Gastrocnemius medialis (tissue), 4 donors: ENCODE measurements at regions of chr5 and their contacts with region 1.

Region 1: DNA sequence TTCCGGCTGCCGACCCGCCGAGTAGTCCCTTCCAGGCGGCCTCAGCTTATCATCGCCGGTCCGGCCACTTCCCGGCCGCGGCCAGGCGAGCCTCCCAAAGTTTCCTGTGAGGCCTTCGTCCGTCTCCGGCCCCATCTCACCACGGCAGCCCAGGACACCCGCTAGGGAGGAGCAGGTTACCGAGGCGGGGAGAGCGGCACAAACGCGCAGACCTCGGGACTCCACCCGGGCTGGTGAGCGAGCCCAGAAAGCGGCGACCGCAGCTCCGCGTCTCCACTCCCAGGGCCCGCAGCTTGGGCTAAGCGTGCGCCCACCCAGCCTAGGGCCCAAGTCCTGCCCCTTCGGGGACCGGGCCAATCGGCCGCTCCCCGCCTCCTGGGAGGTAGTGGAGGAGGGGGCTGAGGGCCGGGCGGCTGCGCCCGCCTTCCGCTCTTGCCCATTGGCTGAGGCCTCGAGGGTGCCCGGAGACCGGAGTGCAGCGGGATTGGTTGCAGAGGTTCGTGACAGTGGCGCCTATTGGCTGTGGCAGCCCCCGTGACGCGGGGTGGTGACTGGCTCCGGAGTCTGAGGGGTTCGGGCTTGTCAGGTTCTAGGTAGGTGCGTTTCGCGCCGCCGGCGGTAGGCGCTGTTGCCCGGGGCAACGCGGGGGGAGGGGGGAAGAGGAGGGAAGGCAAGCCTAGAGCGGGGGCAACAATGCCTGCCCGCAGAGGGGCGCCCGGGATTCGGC is 867 bp downstream of the FER start:
- DNase-seq: peak; percentile 99
- ATAC-seq: peak; percentile 94 to 95
- H3K4me3 ChIP-seq: peak overlapping the region; percentile 88 to 99 (median 96)
- H3K27ac ChIP-seq: peak overlapping the region; percentile 96 to 100 (median 98)
- H3K4me1 ChIP-seq: peaks cover 3 to 15% of the 10 kb centered on the region in 2 donors
- H3K27me3 ChIP-seq: no peaks in the 10 kb centered on the region
- CTCF ChIP-seq: peak in 2 of 5 experiments; percentile 16 to 35
- POLR2A ChIP-seq: peak; percentile 95 to 96

Region 2: DNA sequence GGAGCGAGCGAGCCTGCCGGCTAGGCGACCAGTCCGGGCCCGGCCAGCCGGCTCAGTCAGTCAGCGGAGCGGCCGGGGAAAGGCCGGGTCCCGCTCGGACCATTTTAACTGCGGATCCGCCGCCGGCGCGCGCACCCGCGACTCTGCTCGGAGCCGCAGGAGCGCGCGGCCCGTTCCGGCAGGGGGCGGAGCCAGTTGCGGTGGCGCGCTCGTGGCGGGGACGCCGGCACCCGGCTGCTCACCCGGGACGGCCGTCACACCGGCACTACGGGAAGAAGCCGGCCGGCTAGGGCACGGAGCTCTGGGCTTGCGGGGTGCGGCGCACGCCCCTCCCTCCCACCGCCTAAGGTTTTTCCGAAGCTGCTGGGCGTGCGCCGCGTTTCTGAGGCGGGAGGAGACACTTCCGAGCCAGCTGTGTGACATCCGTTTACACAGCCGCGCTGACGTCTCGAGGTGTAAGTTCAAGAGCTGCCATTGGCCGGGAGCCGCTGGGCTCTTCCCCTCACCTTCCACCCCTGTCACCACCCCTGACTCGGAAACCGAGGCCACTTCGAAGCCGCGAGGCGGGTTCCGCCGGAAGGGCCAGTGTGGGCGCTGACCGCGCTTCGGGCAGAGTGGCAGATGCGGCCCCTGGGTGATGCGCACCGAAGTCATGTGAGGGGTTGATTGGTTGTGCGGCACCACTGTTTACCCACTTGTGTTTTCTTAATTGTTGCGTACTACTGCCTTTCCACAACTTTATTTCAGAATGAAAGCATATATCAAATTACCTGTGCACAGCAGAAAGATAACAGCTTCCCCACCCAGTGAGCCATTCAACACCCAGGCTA is 366.4 kb before region 1 on chr5 and contains the start of gene FBXL17:
- in situ Hi-C with region 1: loop called in 2 of 4 experiments (anchors 25 kb)
- intact Hi-C with region 1: loop called (anchors 1 kb)
- DNase-seq: peak; percentile 93 to 96
- ATAC-seq: peak; percentile 86 to 92
- H3K4me3 ChIP-seq: peak within 1 kb of the TSS; percentile 77 to 97 (median 94)
- H3K27ac ChIP-seq: peak within 1 kb of the TSS; percentile 96 to 100 (median 99)
- H3K4me1 ChIP-seq: peaks cover 37 to 38% of the 10 kb centered on the region in 2 donors
- H3K27me3 ChIP-seq: no peaks in the 10 kb centered on the region
- CTCF ChIP-seq: peak in 1 of 5 experiments; percentile 41
- POLR2A ChIP-seq: peak; percentile 91
- total RNA-seq, gene FBXL17: 23.3 to 33.4 (median 26.9) TPM

Region 3: DNA sequence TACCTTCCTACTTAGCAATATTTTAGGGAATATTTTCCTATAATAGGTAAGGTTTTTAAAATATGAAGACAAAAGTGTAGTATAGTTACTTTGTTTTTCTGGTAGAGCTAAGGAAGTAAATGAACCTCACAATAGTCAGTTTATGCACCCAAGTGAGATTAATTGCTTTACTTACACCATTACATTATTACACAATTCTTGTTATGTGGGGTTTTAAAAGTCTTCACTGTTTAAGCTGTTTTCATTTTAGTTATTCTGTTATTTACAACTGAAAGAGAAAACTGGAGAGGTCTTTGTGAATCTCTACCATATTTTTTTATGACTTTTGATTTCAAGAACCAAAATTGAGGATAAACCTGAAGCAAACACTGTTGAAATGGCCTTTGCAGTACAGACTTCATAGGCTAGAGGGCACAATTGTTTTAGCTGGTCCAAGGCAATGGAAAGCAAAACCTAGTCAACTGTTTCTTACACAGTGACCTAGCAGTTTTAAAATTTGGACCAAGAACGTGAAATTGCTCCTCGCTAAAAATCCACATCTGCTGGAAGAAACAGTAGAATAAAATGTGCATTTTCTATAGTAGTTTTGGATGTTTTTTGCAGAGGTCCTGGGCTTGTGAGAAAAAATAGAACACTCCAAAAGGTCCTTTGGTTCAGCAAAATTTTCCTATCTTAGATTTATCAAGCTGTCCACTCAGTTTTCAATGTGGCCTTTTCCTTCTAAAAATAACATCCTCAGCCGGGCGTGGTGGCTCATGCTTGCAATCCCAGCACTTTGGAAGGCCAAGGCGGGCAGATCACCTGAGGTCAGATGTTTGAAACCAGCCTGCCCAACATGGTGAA is 67.3 kb before region 1 on chr5:
- in situ Hi-C with region 1: no loop called
- intact Hi-C with region 1: loop called (anchors 1 kb)
- DNase-seq: peak in 1 of 2 donors; percentile 50
- ATAC-seq: peak; percentile 96 to 100
- H3K4me3 ChIP-seq: peak overlapping the region in 2 of 4 donors; percentile 13 to 44
- H3K27ac ChIP-seq: peak overlapping the region; percentile 41 to 82 (median 76)
- H3K4me1 ChIP-seq: no peaks in the 10 kb centered on the region
- H3K27me3 ChIP-seq: no peaks in the 10 kb centered on the region
- CTCF ChIP-seq: peak in 4 of 5 experiments; percentile 65 to 86 (median 77)
- POLR2A ChIP-seq: no peak

Region 4: DNA sequence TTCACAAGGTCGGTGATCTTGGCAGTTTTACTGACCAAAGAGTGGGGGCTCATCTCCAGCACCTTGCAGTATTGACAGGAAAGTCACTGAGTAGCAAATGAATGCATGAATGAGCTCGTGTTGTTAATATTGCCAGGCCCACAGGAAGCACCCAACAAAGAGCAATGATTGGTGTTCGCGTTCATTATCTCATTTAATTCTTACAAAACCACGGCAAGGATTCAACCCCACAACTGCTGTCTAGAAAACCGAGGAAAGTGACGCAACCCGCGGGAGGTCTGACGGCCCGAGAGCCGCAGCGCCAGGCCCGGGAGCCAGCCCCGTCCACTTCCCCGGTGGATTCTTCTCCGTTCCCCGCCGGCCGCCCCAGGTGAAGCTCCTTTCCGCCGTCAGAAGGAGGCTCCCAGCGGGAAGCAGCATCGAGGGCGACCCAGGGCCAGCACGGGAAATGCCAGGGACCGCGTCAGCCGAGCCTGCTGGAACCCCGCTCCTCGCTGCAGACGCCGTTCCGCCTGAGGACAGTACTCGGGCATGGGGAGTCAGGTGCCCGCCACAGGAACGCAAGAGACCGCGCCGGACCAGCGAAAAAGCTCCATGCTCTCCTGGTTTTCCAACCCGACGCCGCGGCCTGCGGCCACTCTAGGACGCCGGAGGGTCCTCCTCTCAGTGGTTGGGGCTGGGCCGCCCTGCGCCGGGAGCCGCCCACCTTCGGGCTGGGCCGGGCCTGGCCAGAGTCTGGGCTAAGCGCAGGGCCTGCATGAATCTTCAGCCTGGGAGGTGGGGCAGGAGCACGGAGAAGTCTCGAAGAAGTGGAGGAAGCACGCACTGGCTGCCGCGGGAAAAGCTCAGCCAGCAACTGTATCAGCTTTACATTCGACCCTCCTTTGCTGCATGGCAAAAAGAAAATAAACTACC is 20.7 kb before region 1 on chr5:
- in situ Hi-C with region 1: no loop called
- intact Hi-C with region 1: loop called (anchors 1 kb)
- DNase-seq: peak; percentile 82 to 90
- ATAC-seq: peak; percentile 93 to 96
- H3K4me3 ChIP-seq: peak overlapping the region; percentile 74 to 90 (median 86)
- H3K27ac ChIP-seq: peak overlapping the region; percentile 84 to 91 (median 87)
- H3K4me1 ChIP-seq: peaks cover 13 to 15% of the 10 kb centered on the region in 2 donors
- H3K27me3 ChIP-seq: no peaks in the 10 kb centered on the region
- CTCF ChIP-seq: no peak
- POLR2A ChIP-seq: peak; percentile 52 to 64

Region 5: DNA sequence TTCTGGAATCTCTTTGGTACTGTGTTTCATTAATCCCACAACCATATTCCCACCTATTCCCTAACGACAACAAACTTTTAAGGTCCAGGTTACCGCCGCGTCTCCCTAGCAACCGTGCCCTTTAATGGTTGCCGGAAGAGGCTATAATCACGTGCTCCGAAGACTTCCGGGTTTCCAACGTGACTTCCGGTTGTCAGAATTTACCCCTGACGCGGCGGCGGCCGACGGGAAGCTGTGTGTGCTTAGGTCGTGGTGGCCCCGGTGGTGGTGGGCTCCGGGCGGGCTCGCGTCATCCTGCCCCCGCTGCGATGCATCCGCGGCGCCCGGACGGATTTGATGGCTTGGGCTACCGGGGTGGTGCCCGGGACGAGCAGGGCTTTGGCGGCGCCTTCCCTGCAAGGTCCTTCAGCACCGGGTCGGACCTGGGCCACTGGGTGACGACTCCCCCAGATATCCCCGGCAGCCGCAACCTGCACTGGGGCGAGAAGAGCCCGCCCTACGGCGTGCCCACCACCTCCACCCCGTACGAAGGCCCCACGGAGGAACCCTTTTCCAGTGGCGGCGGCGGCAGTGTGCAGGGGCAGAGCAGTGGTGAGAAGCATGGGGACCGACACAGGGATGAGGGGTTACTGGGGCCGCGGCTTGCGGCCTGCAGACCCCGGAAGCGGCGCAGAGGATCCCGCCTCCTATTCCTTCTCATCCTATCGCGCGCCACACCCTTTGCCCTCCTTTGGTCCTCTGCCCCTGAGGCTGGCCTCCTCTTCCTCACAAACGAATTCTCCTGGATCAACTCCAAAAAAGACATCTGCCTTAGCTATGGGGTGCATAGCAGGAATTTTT is 1990.5 kb after region 1 on chr5 and contains the start of gene SLC25A46:
- in situ Hi-C with region 1: no loop called
- intact Hi-C with region 1: loop called (anchors 10 kb)
- DNase-seq: peak; percentile 70 to 81
- ATAC-seq: peak; percentile 99 to 100
- H3K4me3 ChIP-seq: peak within 1 kb of the TSS; percentile 83 to 100 (median 95)
- H3K27ac ChIP-seq: peak within 1 kb of the TSS; percentile 88 to 93 (median 91)
- H3K4me1 ChIP-seq: peaks cover 10 to 16% of the 10 kb centered on the region in 2 donors
- H3K27me3 ChIP-seq: peaks cover 0 to 2% (median 0%) of the 10 kb centered on the region in 3 donors
- CTCF ChIP-seq: no peak
- POLR2A ChIP-seq: peak; percentile 46 to 60
- total RNA-seq, gene SLC25A46: 71.5 to 114 (median 99.7) TPM